PC-3 (cell line): ENCODE measurements at regions of chr1 and their contacts with region 1.

Region 1: DNA sequence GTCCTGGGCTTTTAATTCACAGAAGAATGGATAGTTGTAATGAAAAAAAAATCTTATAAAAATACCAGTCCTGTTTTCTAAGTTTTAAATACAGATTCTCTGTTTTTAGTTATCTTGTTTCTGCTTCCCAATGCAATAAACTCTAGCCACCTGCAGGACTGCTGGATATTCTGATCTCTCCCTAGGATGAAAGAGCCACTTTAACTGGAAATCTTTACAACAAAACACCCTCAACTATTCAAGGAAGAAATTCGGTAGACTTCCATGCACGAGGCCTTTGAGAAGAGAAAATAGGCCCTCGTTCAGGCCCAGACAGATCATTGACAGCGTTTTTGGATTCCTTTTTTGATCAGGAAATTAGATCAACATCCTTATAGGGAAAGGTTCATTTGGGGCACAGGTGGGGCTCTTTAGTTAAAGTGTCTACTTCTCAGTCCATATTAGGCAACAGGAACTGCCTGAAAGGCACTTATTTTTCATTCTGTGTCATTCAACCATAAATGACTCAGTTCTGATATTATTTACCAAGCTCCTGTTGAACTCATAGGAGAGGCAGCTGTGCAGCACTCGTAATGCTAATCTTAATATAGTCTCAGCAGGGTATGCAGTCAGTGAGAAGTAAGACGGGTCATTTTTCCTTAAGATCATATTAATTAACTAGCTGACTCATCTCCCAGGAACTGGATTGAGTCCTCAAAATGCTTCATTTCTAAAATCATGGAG is 71.1 kb upstream of the ERRFI1 start:
- DNase-seq: peak; percentile 98
- ATAC-seq: peak; percentile 84
- H3K4me3 ChIP-seq: peak overlapping the region; percentile 27; the same call in 1 of the 2 replicates
- H3K27ac ChIP-seq: peak overlapping the region; percentile 98
- H3K4me1 ChIP-seq: peaks cover 50% of the 10 kb centered on the region
- H3K27me3 ChIP-seq: no peaks in the 10 kb centered on the region
- CTCF ChIP-seq: no peak

Region 2: GRCh38 chr1:7549277-7550161 is 547.7 kb before region 1 on chr1:
- CTCF ChIA-PET with region 1: no interaction called
- POLR2A ChIA-PET with region 1: no interaction called
- intact Hi-C with region 1: no loop called
- DNase-seq: peak; percentile 74
- ATAC-seq: peak; percentile 61
- H3K4me3 ChIP-seq: no peak overlapping the region
- H3K27ac ChIP-seq: peak overlapping the region; percentile 24
- H3K4me1 ChIP-seq: peaks cover 12% of the 10 kb centered on the region; the same call in 1 of the 2 replicates
- H3K27me3 ChIP-seq: peaks cover 20% of the 10 kb centered on the region
- CTCF ChIP-seq: no peak

Region 3: DNA sequence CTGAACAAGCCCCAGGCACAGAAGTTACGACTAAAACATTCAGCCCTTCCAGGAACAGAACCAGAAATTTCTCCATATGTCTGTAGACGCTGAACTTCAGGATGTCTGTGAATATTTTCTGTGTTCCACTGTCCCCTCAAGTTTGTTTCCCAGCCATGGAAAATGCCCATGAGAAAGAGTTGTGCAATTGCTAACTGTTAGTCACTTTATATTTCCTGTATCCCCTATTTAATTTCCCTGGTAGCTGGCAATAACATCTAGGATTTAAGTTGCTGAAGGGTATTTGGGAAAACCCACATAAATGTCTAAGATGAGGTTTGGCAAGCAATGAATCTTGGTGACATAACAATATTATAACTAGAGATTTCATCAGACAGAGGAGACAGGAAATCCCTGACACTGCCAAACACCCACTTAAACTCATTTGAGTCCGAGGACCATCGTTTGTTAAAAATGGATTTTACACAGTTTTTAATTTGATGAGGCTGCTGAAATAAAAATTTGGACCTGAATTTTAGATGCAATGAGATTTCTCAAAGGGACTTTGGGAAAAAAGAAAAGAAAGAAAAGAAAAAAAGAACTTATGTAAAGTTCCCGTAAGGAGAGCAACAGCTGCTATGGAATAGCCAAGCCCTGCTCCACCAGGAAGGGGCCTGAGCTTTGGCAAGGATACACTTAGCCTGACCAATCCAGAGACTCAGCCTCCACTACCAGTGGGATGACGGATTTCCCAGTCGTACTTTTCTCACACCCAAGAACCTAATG is 49.4 kb before region 1 on chr1:
- CTCF ChIA-PET with region 1: no interaction called
- POLR2A ChIA-PET with region 1: no interaction called
- intact Hi-C with region 1: loop called (anchors 1 kb)
- DNase-seq: peak; percentile 94
- ATAC-seq: peak; percentile 74
- H3K4me3 ChIP-seq: peak overlapping the region; percentile 12; the same call in 1 of the 2 replicates
- H3K27ac ChIP-seq: peak overlapping the region; percentile 96
- H3K4me1 ChIP-seq: peaks cover 42% of the 10 kb centered on the region
- H3K27me3 ChIP-seq: no peaks in the 10 kb centered on the region
- CTCF ChIP-seq: no peak

Region 4: GRCh38 chr1:8077120-8077573 is 20.1 kb before region 1 on chr1:
- CTCF ChIA-PET with region 1: no interaction called
- POLR2A ChIA-PET with region 1: interaction called, 5 read pairs
- intact Hi-C with region 1: loop called (anchors 2 kb)
- DNase-seq: peak; percentile 89
- ATAC-seq: peak; percentile 93
- H3K4me3 ChIP-seq: no peak overlapping the region
- H3K27ac ChIP-seq: peak overlapping the region; percentile 97
- H3K4me1 ChIP-seq: peaks cover 39% of the 10 kb centered on the region
- H3K27me3 ChIP-seq: no peaks in the 10 kb centered on the region
- CTCF ChIP-seq: no peak

Region 5: GRCh38 chr1:8121261-8122170 is 24.3 kb after region 1 on chr1:
- CTCF ChIA-PET with region 1: no interaction called
- POLR2A ChIA-PET with region 1: no interaction called
- intact Hi-C with region 1: no loop called
- DNase-seq: peak; percentile 45
- ATAC-seq: no peak
- H3K4me3 ChIP-seq: no peak overlapping the region
- H3K27ac ChIP-seq: peak overlapping the region; percentile 54
- H3K4me1 ChIP-seq: peaks cover 14% of the 10 kb centered on the region
- H3K27me3 ChIP-seq: no peaks in the 10 kb centered on the region
- CTCF ChIP-seq: no peak

Region 6: GRCh38 chr1:8174807-8175206 is 77.6 kb after region 1 on chr1:
- CTCF ChIA-PET with region 1: no interaction called
- POLR2A ChIA-PET with region 1: interaction called, 12 read pairs
- intact Hi-C with region 1: loop called (anchors 2 kb)
- DNase-seq: no peak
- ATAC-seq: peak; percentile 49; the same call in 1 of the 2 replicates
- H3K4me3 ChIP-seq: no peak overlapping the region
- H3K27ac ChIP-seq: peak overlapping the region; percentile 66
- H3K4me1 ChIP-seq: peaks cover 22% of the 10 kb centered on the region
- H3K27me3 ChIP-seq: no peaks in the 10 kb centered on the region
- CTCF ChIP-seq: no peak

Region 7: DNA sequence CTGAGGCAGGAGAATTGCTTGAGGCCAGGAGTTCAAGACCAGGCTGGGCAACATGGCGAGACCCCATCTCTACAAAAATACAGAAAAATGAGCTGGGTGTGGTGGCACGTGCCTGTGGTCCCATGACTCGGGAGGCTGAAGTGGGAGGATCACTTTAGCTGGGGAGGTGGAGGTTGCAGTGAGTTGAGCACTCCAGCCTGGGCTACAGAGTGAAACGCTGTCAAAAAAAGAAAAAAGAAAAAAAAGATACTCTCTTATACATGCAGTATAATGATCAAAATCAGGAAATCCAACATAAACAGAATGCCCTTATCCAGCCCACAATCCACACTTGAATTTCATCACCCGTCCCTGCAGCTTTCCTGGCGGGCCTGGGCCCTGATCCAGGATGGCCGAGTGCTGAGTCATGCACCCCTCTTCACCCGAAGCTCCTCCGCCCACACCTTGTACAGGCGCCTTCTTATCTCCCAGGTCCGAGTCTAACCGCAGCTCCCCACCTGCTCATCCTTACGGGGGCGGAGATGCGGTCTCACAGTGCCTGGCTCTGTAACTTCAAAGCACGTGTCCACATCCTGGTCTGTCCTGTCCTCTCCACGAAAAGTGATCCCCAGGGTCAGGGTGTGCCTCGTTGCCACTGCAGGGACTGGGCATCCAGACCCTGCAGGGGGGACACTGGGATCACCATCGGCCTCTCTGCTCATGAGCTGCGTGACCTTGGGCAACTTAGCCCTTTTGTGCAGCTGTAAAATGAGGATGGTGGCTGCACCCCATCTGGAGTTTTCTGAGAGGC is 100.5 kb after region 1 on chr1:
- CTCF ChIA-PET with region 1: no interaction called
- POLR2A ChIA-PET with region 1: interaction called, 3 read pairs
- intact Hi-C with region 1: loop called (anchors 1 kb)
- DNase-seq: peak; percentile 96
- ATAC-seq: peak; percentile 63
- H3K4me3 ChIP-seq: no peak overlapping the region
- H3K27ac ChIP-seq: peak overlapping the region; percentile 98
- H3K4me1 ChIP-seq: peaks cover 61% of the 10 kb centered on the region
- H3K27me3 ChIP-seq: no peaks in the 10 kb centered on the region
- CTCF ChIP-seq: no peak

Region 8: DNA sequence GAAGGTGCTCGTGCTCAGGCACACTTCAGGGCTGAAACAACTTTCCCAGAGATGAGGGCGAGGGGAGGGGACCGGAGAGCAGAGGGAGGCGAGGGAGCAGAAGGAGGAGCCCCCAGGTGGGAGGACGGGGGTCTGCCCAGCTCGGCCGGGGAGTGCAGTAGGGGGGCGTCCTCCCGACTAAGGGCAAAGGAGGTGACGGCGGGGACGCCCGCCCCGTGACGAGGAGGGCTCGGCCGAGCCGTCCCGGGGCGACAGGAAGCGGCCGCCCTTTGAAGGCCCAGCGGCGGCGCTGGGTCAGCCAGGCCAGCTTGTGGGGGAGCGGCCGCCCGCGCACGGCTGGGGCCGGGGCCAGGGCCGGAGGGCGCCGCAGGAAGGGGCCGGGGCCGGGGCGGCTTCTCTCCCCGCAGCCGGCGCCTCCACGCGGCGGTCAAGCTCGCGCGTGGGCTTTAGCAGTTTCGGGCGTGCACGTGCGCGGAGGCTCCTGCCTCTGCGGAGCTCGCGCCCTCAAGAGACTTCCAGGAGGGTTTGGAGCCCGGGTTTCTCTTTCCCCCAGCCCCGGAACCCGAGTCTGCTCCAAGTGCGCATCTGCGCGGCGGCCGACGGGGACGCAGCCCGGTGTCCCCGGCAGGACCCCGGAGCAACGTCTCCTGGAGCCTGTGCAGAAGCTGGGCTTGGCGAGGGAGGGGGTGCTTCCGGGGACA is 119.9 kb after region 1 on chr1:
- CTCF ChIA-PET with region 1: no interaction called
- POLR2A ChIA-PET with region 1: interaction called, 15 read pairs
- intact Hi-C with region 1: no loop called
- DNase-seq: no peak
- ATAC-seq: no peak
- H3K4me3 ChIP-seq: no peak overlapping the region
- H3K27ac ChIP-seq: no peak overlapping the region
- H3K4me1 ChIP-seq: peaks cover 28% of the 10 kb centered on the region
- H3K27me3 ChIP-seq: no peaks in the 10 kb centered on the region
- CTCF ChIP-seq: no peak

Region 9: GRCh38 chr1:8314346-8315280 is 217.4 kb after region 1 on chr1:
- CTCF ChIA-PET with region 1: interaction called, 11 read pairs
- POLR2A ChIA-PET with region 1: interaction called, 4 read pairs
- intact Hi-C with region 1: loop called (anchors 1 kb)
- DNase-seq: peak; percentile 90
- ATAC-seq: peak; percentile 79
- H3K4me3 ChIP-seq: no peak overlapping the region
- H3K27ac ChIP-seq: peak overlapping the region; percentile 62
- H3K4me1 ChIP-seq: peaks cover 29% of the 10 kb centered on the region
- H3K27me3 ChIP-seq: no peaks in the 10 kb centered on the region
- CTCF ChIP-seq: peak; percentile 91